ENCODE measurements at regions of chr1 and their contacts with region 1.

Region 1: DNA sequence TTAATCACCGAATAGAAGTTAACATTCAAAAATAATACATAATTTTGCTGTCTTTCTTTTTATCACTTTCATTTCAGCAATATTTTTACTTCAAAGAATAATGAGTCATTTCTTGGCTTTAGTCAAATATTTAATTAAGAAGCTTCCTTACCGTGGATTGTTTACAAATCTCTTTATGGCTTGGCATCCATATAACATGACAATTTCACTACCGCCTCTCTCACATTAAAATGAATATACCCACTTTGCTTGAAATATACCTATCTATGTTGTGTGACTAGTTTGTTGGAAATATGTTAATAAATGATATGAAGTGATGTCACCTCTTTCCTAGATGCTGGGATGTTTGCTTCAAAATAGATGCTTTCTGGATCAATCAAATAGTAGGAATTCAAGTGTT is 1203.9 kb downstream of the AMY1C start:
- DNase-seq: peak; percentile 33
- ATAC-seq: peak; percentile 82
- H3K4me3 ChIP-seq: no peak overlapping the region
- H3K27ac ChIP-seq: no peak overlapping the region
- H3K4me1 ChIP-seq: 0 out of 2 replicates have a peak, but pooled peaks cover 7% of the 10 kb centered on the region
- H3K27me3 ChIP-seq: no peaks in the 10 kb centered on the region
- CTCF ChIP-seq: no peak

Region 2: GRCh38 chr1:104795931-104796330 is 157.6 kb before region 1 on chr1:
- CTCF ChIA-PET with region 1: no interaction called
- POLR2A ChIA-PET with region 1: no interaction called
- intact Hi-C with region 1: no loop called
- DNase-seq: no peak
- ATAC-seq: no peak
- H3K4me3 ChIP-seq: no peak overlapping the region
- H3K27ac ChIP-seq: no peak overlapping the region
- H3K4me1 ChIP-seq: no peaks in the 10 kb centered on the region
- H3K27me3 ChIP-seq: no peaks in the 10 kb centered on the region
- CTCF ChIP-seq: no peak

Region 3: GRCh38 chr1:105087496-105087895 is 133.9 kb after region 1 on chr1:
- CTCF ChIA-PET with region 1: no interaction called
- POLR2A ChIA-PET with region 1: no interaction called
- intact Hi-C with region 1: loop called (anchors 5 kb)
- DNase-seq: peak; percentile 98
- ATAC-seq: peak; percentile 98
- H3K4me3 ChIP-seq: no peak overlapping the region
- H3K27ac ChIP-seq: peak overlapping the region; percentile 90
- H3K4me1 ChIP-seq: peaks cover 23% of the 10 kb centered on the region
- H3K27me3 ChIP-seq: no peaks in the 10 kb centered on the region
- CTCF ChIP-seq: no peak

Measured in PC-3 (cell line).